Endothelial cell of umbilical vein (primary cell): ENCODE measurements at regions of chr14 and their contacts with region 1.

Region 1: GRCh38 chr14:73825551-73826188 is 26.0 kb upstream of the PTGR2 start:
- DNase-seq: peak; percentile 71
- H3K4me3 ChIP-seq: no peak overlapping the region
- H3K27ac ChIP-seq: no peak overlapping the region
- H3K4me1 ChIP-seq: peaks cover 7% of the 10 kb centered on the region
- H3K27me3 ChIP-seq: no peaks in the 10 kb centered on the region
- CTCF ChIP-seq: peak; percentile 89
- POLR2A ChIP-seq: no peak

Region 2: GRCh38 chr14:73759714-73760597 is 65.7 kb before region 1 on chr14:
- CTCF ChIA-PET with region 1: interaction called, 27 read pairs
- POLR2A ChIA-PET with region 1: no interaction called
- dilution Hi-C with region 1: no loop called
- intact Hi-C with region 1: loop called (anchors 1 kb)
- DNase-seq: peak; percentile 97
- H3K4me3 ChIP-seq: peak overlapping the region; percentile 53 to 60 (median 54)
- H3K27ac ChIP-seq: peak overlapping the region; percentile 96
- H3K4me1 ChIP-seq: peaks cover 53% of the 10 kb centered on the region
- H3K27me3 ChIP-seq: no peaks in the 10 kb centered on the region
- CTCF ChIP-seq: peak in 1 of 2 donors; percentile 11
- POLR2A ChIP-seq: peak; percentile 98